ENCODE measurements at regions of chr9 and their contacts with region 1.

Region 1: DNA sequence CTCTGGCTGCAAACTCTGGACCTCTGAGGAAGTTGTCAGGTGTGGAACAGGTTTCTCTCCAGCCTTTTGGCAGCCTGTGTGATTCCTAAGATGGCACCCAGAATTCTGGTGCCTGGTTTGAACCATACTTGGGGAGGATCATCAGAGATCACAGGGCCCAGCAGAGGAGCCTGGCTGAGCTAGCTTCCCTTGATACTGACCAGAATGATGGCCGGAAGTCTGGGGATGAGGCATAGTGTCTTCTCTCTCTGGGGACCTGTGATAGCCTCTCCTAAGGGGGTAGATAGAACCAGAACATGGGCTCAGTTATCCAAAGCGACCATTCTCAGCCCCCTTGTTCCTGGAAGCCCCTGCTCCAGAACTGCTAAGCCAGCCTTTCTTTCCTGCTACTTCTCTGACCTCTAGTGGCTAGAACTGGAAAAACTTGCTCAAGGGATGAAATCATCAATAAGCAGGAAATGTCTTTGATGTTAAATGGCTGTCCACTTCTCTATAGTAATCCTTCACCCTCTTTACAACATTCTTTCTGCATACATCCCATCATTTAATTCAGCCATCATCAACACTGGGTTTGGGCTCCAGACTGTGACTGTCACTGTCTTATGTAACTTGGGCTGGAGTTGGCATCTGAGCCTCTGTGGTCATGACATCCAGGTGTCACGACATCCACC is 55.1 kb downstream of the C9orf152 start:
- DNase-seq: no peak
- H3K4me3 Mint-ChIP-seq: no peak overlapping the region
- H3K27ac Mint-ChIP-seq: no peak overlapping the region
- H3K4me1 Mint-ChIP-seq: peaks cover 56% of the 10 kb centered on the region
- H3K27me3 Mint-ChIP-seq: no peaks in the 10 kb centered on the region

Region 2: DNA sequence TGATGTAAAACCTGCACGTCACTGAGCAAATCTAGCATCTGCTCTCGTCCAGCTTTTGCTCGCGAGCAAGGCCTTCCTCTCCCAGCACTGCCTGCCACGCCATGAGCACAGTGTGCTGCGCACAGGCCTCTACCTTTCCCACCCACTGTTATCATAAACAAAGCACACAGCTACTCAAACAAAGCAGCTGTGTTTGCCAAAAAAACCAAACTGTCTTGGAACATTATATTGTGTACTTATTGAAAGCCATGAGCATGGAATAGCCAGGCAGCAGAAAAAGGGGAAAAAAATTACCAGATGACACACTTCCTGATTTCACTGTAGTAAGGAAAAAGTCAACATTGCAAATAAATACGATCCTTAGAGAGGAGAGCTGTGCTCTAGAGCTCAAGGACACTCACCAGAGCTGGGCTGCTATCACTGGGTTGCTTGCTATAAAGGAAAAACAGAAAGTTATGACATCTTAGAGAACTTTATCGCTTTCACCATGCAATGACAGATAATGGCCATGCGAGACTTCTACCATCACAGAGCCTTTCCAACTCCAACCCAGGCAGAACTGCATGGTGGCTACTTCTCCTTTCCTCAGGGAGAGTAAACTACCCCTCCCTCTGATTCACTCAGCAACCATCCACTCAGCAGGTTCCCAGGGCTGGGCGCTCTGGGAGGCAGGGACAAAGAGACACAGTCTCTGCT is 901.6 kb before region 1 on chr9:
- CTCF ChIA-PET with region 1: no interaction called
- POLR2A ChIA-PET with region 1: no interaction called
- intact Hi-C with region 1: no loop called
- DNase-seq: no peak
- H3K4me3 Mint-ChIP-seq: no peak overlapping the region
- H3K27ac Mint-ChIP-seq: no peak overlapping the region
- H3K4me1 Mint-ChIP-seq: no peaks in the 10 kb centered on the region
- H3K27me3 Mint-ChIP-seq: peaks cover 3% of the 10 kb centered on the region

Region 3: GRCh38 chr9:109440797-109441287 is 712.0 kb before region 1 on chr9:
- CTCF ChIA-PET with region 1: no interaction called
- POLR2A ChIA-PET with region 1: no interaction called
- intact Hi-C with region 1: loop called (anchors 10 kb)
- DNase-seq: peak; percentile 63
- H3K4me3 Mint-ChIP-seq: no peak overlapping the region
- H3K27ac Mint-ChIP-seq: no peak overlapping the region
- H3K4me1 Mint-ChIP-seq: peaks cover 15% of the 10 kb centered on the region
- H3K27me3 Mint-ChIP-seq: peaks cover 8% of the 10 kb centered on the region

Region 4: DNA sequence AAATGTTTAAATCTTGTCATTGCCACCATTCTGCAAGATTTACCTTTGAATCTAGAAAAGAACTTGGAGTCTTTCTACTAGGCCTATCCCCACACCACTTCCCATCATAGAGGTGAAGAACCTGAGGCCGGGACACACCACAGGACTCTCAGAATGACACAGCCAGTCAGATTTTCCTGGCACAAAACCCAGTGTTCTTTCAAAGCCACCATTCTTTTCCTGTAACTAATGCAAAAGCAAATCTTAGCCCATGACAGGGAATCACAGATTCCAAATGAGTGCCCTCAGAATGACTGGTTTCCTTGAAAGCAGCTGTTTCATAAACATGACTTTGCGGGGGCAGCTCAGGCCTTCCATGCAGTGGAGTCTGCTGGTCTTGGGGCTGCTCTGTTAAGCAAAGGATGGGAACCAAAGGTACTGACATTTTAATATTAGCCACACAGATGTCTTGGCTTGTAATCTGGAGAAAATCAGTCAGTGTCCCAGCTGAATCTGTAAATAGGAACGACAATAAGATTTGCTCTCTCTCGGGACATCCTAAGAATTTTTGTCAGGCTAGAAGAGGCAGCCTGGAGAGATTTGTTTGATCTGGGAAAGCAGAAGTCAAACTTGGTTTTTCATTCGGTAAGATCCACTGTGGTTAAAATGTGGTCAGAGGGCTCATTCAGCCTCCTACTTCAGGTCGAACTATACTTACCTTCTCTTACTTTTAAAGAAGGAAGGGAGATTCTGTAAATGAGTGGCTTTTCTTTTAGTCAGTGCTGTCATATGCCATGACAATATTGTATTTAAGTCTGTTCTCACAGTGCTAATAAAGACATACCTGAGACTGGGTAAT is 257.7 kb before region 1 on chr9:
- CTCF ChIA-PET with region 1: no interaction called
- POLR2A ChIA-PET with region 1: no interaction called
- intact Hi-C with region 1: loop called (anchors 1 kb)
- DNase-seq: peak; percentile 82
- H3K4me3 Mint-ChIP-seq: peak overlapping the region; percentile 31
- H3K27ac Mint-ChIP-seq: peak overlapping the region; percentile 89
- H3K4me1 Mint-ChIP-seq: peaks cover 34% of the 10 kb centered on the region
- H3K27me3 Mint-ChIP-seq: peaks cover 9% of the 10 kb centered on the region

Region 5: GRCh38 chr9:109918339-109919163 is 234.3 kb before region 1 on chr9:
- CTCF ChIA-PET with region 1: interaction called, 5 read pairs
- POLR2A ChIA-PET with region 1: interaction called, 5 read pairs
- intact Hi-C with region 1: loop called (anchors 1 kb)
- DNase-seq: peak; percentile 75
- H3K4me3 Mint-ChIP-seq: peak overlapping the region; percentile 58
- H3K27ac Mint-ChIP-seq: peak overlapping the region; percentile 97
- H3K4me1 Mint-ChIP-seq: peaks cover 29% of the 10 kb centered on the region
- H3K27me3 Mint-ChIP-seq: peaks cover 1% of the 10 kb centered on the region

Region 6: GRCh38 chr9:109950710-109951443 is 202.0 kb before region 1 on chr9:
- CTCF ChIA-PET with region 1: interaction called, 4 read pairs
- POLR2A ChIA-PET with region 1: interaction called, 4 read pairs
- intact Hi-C with region 1: loop called (anchors 1 kb)
- DNase-seq: peak; percentile 64
- H3K4me3 Mint-ChIP-seq: peak overlapping the region; percentile 23
- H3K27ac Mint-ChIP-seq: peak overlapping the region; percentile 82
- H3K4me1 Mint-ChIP-seq: peaks cover 30% of the 10 kb centered on the region
- H3K27me3 Mint-ChIP-seq: no peaks in the 10 kb centered on the region

Region 7: DNA sequence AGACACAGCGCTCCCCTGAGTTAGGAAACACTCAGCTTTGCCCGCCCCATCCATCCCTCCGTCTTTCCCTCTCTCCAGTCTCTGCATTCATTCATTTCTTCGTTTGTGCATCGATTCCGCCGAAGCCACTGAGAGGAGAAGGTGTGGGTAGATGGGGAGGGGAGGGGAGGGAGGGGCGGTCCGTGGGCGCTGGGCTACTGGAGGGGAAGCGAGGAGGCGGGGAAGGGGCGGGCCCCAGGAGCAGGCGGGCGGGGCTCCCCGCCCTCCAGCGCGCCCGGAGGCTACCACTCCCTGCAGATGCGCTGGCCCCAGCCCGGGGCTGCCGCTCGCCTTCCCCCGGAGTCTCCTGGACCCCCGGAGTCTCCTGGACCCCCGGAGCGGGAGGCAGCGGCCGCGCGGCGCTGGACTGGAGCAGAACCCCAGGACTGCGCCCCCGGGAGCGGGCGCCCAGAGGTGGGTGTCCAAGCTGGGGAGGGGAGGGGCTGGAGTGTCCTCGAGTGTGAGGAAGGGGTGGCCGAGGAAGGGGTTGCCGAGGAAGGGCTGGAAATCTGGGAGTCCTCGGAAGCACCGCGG is 104.3 kb before region 1 on chr9:
- CTCF ChIA-PET with region 1: interaction called, 4 read pairs
- POLR2A ChIA-PET with region 1: interaction called, 7 read pairs
- intact Hi-C with region 1: loop called (anchors 1 kb)
- DNase-seq: peak; percentile 89
- H3K4me3 Mint-ChIP-seq: peak overlapping the region; percentile 90
- H3K27ac Mint-ChIP-seq: peak overlapping the region; percentile 72
- H3K4me1 Mint-ChIP-seq: peaks cover 39% of the 10 kb centered on the region
- H3K27me3 Mint-ChIP-seq: peaks cover 13% of the 10 kb centered on the region

Region 8: GRCh38 chr9:110228960-110229359 is 76.1 kb after region 1 on chr9:
- CTCF ChIA-PET with region 1: no interaction called
- POLR2A ChIA-PET with region 1: no interaction called
- intact Hi-C with region 1: no loop called
- DNase-seq: no peak
- H3K4me3 Mint-ChIP-seq: no peak overlapping the region
- H3K27ac Mint-ChIP-seq: no peak overlapping the region
- H3K4me1 Mint-ChIP-seq: no peaks in the 10 kb centered on the region
- H3K27me3 Mint-ChIP-seq: peaks cover 2% of the 10 kb centered on the region